CD4-positive, alpha-beta memory T cell (primary cell): ENCODE measurements at regions of chr19 and their contacts with region 1.

Region 1: GRCh38 chr19:47190167-47190727 is 40.8 kb downstream of the BBC3 start:
- DNase-seq: peak; percentile 60 to 78 (median 64)
- H3K4me3 ChIP-seq: no peak overlapping the region
- H3K4me3 Mint-ChIP-seq: peak overlapping the region in 7 of 8 donors; percentile 5 to 81 (median 56)
- H3K27ac ChIP-seq: peak overlapping the region; percentile 47
- H3K27ac Mint-ChIP-seq: peak overlapping the region; percentile 62 to 94 (median 85)
- H3K4me1 ChIP-seq: peaks cover 72% of the 10 kb centered on the region
- H3K4me1 Mint-ChIP-seq: peaks cover 40 to 71% (median 48%) of the 10 kb centered on the region in 4 donors
- H3K27me3 ChIP-seq: no peaks in the 10 kb centered on the region
- H3K27me3 Mint-ChIP-seq: no peaks in the 10 kb centered on the region

Region 2: GRCh38 chr19:47143322-47144073 is 46.7 kb before region 1 on chr19:
- CTCF ChIA-PET with region 1: interaction called, 74 read pairs
- POLR2A ChIA-PET with region 1: interaction called, 25 read pairs
- intact Hi-C with region 1: no loop called
- DNase-seq: no peak
- H3K4me3 ChIP-seq: no peak overlapping the region
- H3K4me3 Mint-ChIP-seq: no peak overlapping the region
- H3K27ac ChIP-seq: no peak overlapping the region
- H3K27ac Mint-ChIP-seq: peak overlapping the region; percentile 30 to 87 (median 41)
- H3K4me1 ChIP-seq: peaks cover 37% of the 10 kb centered on the region
- H3K4me1 Mint-ChIP-seq: peaks cover 34 to 68% (median 48%) of the 10 kb centered on the region in 4 donors
- H3K27me3 ChIP-seq: no peaks in the 10 kb centered on the region
- H3K27me3 Mint-ChIP-seq: no peaks in the 10 kb centered on the region

Region 3: DNA sequence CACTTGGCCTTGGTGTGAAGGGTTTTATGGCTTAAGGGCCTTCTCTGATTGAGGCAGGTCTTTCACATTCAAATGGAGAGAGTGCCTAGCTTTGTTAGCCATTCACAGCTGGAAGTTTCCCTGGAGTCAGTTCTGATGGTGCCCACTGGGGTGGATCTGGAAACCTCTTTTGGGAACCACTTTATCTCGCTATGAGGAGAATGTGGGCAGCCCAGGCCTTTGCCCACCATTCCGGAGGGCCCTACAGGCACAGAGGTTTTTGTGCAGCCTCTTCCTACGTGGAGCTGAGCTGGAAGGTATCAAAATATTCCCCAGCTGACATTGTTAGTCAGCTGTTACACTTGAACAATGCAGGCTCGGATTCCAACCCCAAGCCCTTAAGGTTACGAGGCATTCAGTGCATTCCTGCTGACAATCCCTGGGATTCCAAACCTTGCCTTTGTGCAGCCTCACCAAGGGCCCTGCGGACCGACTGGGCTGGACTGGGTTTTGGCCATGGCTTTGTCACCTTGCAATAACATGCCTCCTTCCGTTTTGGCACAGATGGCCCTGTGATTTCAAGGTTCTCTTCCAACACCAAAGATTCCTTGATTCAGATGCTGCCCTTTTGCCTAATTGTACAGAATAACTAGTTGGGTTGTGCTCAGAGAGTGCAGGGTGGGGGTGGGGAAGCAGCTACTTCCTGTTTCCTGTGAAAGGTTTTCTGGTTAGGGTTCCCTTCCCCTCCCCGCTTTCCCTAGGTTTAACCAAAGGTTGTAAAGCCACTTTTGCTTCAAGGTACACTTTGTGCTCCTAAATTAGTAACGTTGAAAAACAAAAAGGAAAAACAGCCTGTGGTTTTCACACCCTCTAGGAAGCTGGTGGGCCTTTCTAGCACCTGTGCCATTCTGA is 32.6 kb before region 1 on chr19:
- CTCF ChIA-PET with region 1: interaction called, 59 read pairs
- POLR2A ChIA-PET with region 1: interaction called, 140 read pairs
- intact Hi-C with region 1: loop called (anchors 1 kb)
- DNase-seq: peak; percentile 45 to 56 (median 53)
- H3K4me3 ChIP-seq: peak overlapping the region; percentile 17 to 40
- H3K4me3 Mint-ChIP-seq: peak overlapping the region; percentile 62 to 90 (median 84)
- H3K27ac ChIP-seq: peak overlapping the region; percentile 43
- H3K27ac Mint-ChIP-seq: peak overlapping the region; percentile 76 to 98 (median 95)
- H3K4me1 ChIP-seq: peaks cover 75% of the 10 kb centered on the region
- H3K4me1 Mint-ChIP-seq: peaks cover 40 to 74% (median 60%) of the 10 kb centered on the region in 4 donors
- H3K27me3 ChIP-seq: no peaks in the 10 kb centered on the region
- H3K27me3 Mint-ChIP-seq: no peaks in the 10 kb centered on the region

Region 4: DNA sequence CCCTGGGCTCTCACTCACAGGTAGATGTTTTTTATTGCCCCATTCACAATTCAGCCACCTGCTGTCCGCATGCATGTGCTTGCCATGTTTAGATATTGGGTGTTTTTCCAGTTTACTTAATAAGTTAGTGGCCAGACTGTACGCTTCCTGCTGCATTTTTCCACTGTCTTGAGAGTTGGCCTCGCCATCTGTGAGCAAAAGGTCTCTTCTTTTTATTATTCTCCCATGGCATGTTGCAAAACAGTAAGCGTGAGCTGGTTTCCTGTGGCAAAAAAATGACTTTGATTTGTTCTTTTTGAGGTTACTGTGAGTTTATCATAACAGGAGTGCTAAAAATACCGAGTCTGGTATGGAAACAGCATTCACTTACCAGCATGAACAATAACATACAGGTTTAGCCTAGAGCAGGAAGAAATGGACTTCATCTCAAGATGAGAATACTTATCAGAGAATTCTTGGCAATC is 13.6 kb before region 1 on chr19:
- CTCF ChIA-PET with region 1: interaction called, 31 read pairs
- POLR2A ChIA-PET with region 1: interaction called, 66 read pairs
- intact Hi-C with region 1: loop called (anchors 1 kb)
- DNase-seq: peak; percentile 65 to 79 (median 70)
- H3K4me3 ChIP-seq: peak overlapping the region in 1 of 2 donors; percentile 26
- H3K4me3 Mint-ChIP-seq: peak overlapping the region; percentile 67 to 92 (median 78)
- H3K27ac ChIP-seq: peak overlapping the region; percentile 39
- H3K27ac Mint-ChIP-seq: peak overlapping the region; percentile 88 to 96 (median 91)
- H3K4me1 ChIP-seq: peaks cover 55% of the 10 kb centered on the region
- H3K4me1 Mint-ChIP-seq: peaks cover 42 to 75% (median 54%) of the 10 kb centered on the region in 4 donors
- H3K27me3 ChIP-seq: no peaks in the 10 kb centered on the region
- H3K27me3 Mint-ChIP-seq: no peaks in the 10 kb centered on the region

Region 5: GRCh38 chr19:47225746-47226425 is 35.6 kb after region 1 on chr19:
- CTCF ChIA-PET with region 1: interaction called, 13 read pairs
- POLR2A ChIA-PET with region 1: interaction called, 48 read pairs
- intact Hi-C with region 1: loop called (anchors 5 kb)
- DNase-seq: peak; percentile 83 to 87 (median 84)
- H3K4me3 ChIP-seq: peak overlapping the region in 1 of 2 donors; percentile 52
- H3K4me3 Mint-ChIP-seq: peak overlapping the region; percentile 22 to 79 (median 64)
- H3K27ac ChIP-seq: peak overlapping the region; percentile 80
- H3K27ac Mint-ChIP-seq: peak overlapping the region; percentile 74 to 96 (median 89)
- H3K4me1 ChIP-seq: peaks cover 41% of the 10 kb centered on the region
- H3K4me1 Mint-ChIP-seq: peaks cover 5 to 20% (median 11%) of the 10 kb centered on the region in 4 donors
- H3K27me3 ChIP-seq: no peaks in the 10 kb centered on the region
- H3K27me3 Mint-ChIP-seq: no peaks in the 10 kb centered on the region

Region 6: DNA sequence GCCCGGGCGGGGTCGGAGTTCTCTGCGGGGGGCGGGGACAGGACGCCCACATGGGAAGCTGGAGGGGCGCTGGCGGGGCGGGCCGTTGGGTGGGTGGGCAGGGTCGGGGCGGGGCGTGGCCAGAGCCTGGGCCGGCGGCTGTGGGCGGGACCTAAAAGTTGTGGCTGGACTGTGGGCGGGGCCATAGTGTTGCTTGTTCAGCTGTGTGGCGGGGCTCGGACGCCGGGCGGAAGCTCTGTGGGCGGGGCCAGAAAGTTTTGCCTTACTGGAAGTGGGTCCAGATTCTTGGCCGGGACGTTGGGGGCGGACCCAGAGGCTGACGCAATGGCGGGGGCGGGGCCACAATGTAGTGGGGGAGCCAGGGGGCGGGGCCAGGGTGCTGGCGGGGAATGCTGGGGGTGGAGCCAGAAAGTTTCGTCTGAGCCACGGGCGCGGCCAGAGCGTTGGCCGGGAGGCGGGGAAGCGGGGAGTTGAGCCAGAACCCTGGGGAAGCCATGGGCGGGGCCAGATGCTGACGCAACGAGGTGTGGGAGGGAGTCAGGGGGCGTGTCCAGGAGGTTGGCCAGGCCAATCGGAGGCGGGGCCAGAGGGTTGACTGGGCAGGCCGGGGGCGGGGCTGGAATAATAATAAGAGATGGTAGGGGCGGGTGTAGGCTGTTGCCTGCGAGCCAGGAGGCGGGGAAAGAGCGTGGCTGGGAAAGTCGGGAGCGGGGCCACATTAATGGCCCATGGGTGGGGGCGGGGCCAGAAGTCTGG is 66.6 kb after region 1 on chr19:
- CTCF ChIA-PET with region 1: interaction called, 4 read pairs
- POLR2A ChIA-PET with region 1: interaction called, 14 read pairs
- intact Hi-C with region 1: no loop called
- DNase-seq: peak; percentile 97 to 99 (median 98)
- H3K4me3 ChIP-seq: peak overlapping the region; percentile 61 to 62
- H3K4me3 Mint-ChIP-seq: peak overlapping the region; percentile 88 to 98 (median 94)
- H3K27ac ChIP-seq: peak overlapping the region; percentile 76
- H3K27ac Mint-ChIP-seq: peak overlapping the region; percentile 94 to 99 (median 99)
- H3K4me1 ChIP-seq: peaks cover 18% of the 10 kb centered on the region
- H3K4me1 Mint-ChIP-seq: peaks cover 20 to 44% (median 31%) of the 10 kb centered on the region in 4 donors
- H3K27me3 ChIP-seq: no peaks in the 10 kb centered on the region
- H3K27me3 Mint-ChIP-seq: no peaks in the 10 kb centered on the region

Region 7: GRCh38 chr19:47406711-47407416 is 216.6 kb after region 1 on chr19:
- CTCF ChIA-PET with region 1: no interaction called
- POLR2A ChIA-PET with region 1: no interaction called
- intact Hi-C with region 1: no loop called
- DNase-seq: no peak
- H3K4me3 ChIP-seq: no peak overlapping the region
- H3K4me3 Mint-ChIP-seq: no peak overlapping the region
- H3K27ac ChIP-seq: no peak overlapping the region
- H3K27ac Mint-ChIP-seq: no peak overlapping the region
- H3K4me1 ChIP-seq: no peaks in the 10 kb centered on the region
- H3K4me1 Mint-ChIP-seq: peaks cover 0 to 2% (median under 1%) of the 10 kb centered on the region in 4 donors
- H3K27me3 ChIP-seq: peaks cover 10% of the 10 kb centered on the region
- H3K27me3 Mint-ChIP-seq: peaks cover 35 to 44% of the 10 kb centered on the region in 2 donors